ENCODE measurements at regions of chr19 and their contacts with region 1.

Region 1: GRCh38 chr19:47697863-47698609 is 15.2 kb upstream of the EHD2 start:
- DNase-seq: peak; percentile 85
- CTCF ChIP-seq: peak; percentile 99

Region 2: GRCh38 chr19:47296036-47296435 is 402.0 kb before region 1 on chr19:
- in situ Hi-C with region 1: loop called (anchors 25 kb)
- DNase-seq: peak; percentile 83
- CTCF ChIP-seq: peak; percentile 84

Region 3: DNA sequence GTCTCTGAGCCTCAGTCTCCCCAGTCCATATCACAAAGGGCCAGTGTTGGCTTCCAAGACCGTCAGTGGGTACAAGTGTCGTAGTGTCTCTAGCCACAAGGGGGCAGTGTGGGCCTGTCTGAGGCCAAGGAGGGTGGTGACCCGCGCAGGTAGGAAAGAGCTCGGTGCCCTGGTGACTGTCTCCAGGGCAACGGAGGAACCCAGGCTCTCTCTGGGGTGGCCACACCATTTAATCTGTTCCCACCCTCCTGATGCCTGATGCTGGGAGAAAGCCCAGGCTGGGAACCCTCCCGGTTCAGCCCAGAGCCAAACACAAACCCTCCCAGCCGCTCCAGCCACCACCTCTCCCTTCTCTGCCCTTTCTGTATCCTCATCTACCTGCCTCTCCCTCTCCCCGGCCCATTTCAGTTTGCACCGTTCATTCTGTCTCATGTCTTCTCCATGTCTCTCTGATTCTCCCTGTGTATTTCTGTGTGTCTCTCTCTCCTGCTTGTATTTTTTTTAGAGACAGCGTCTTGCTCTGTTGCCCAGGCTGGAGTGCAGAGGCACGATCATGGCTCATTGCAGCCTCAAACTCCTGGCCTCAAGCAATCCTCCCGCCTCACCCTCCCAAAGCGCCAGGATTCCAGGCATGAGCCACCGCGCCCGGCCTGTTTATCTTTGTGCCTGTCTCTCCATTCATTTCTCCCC is 261.2 kb before region 1 on chr19:
- in situ Hi-C with region 1: loop called (anchors 5 kb)
- DNase-seq: peak; percentile 85
- CTCF ChIP-seq: peak; percentile 91

Region 4: GRCh38 chr19:47471733-47472457 is 226.1 kb before region 1 on chr19 and contains the start of gene SLC8A2:
- in situ Hi-C with region 1: no loop called
- DNase-seq: peak; percentile 86
- CTCF ChIP-seq: no peak